Endothelial cell of umbilical vein (primary cell): ENCODE measurements at regions of chr13 and their contacts with region 1.

Region 1: DNA sequence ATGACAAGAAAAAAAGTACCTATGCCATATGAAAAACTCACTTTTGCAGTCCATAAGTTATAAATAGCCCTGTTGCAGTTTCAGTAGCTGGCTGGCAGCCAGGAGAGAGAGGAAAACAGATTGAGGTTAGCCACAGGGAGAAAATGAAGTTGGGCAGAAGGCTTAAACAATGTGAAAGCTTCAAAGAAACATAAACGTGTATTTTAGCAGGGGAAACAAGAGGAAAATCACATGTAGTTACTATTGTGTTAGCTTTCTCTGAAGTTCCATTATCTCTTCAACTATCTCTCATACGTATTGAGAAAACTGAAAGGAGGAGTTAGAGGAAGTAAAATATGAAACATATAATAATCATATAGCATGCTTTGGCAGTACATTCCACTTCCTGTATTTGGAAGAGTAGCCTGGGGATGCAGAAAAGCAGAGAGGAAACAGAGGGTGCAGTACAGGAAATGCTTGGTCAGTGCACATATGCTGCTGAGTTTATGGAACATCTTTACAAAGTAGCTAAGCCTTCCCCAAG is 1551.1 kb downstream of the EFNB2 start:
- DNase-seq: peak; percentile 92
- H3K4me3 ChIP-seq: peak overlapping the region in 1 of 3 experiments; percentile 25
- H3K27ac ChIP-seq: peak overlapping the region; percentile 78
- H3K4me1 ChIP-seq: peaks cover 26% of the 10 kb centered on the region
- H3K27me3 ChIP-seq: no peaks in the 10 kb centered on the region
- CTCF ChIP-seq: no peak
- POLR2A ChIP-seq: no peak

Region 2: GRCh38 chr13:104854698-104855097 is 129.7 kb before region 1 on chr13:
- CTCF ChIA-PET with region 1: no interaction called
- POLR2A ChIA-PET with region 1: no interaction called
- dilution Hi-C with region 1: no loop called
- intact Hi-C with region 1: no loop called
- DNase-seq: no peak
- H3K4me3 ChIP-seq: no peak overlapping the region
- H3K27ac ChIP-seq: no peak overlapping the region
- H3K4me1 ChIP-seq: no peaks in the 10 kb centered on the region
- H3K27me3 ChIP-seq: no peaks in the 10 kb centered on the region
- CTCF ChIP-seq: no peak
- POLR2A ChIP-seq: no peak

Region 3: GRCh38 chr13:105007166-105007808 is 22.9 kb after region 1 on chr13:
- CTCF ChIA-PET with region 1: no interaction called
- POLR2A ChIA-PET with region 1: no interaction called
- dilution Hi-C with region 1: no loop called
- intact Hi-C with region 1: loop called (anchors 2 kb)
- DNase-seq: peak; percentile 85
- H3K4me3 ChIP-seq: no peak overlapping the region
- H3K27ac ChIP-seq: no peak overlapping the region
- H3K4me1 ChIP-seq: peaks cover 4% of the 10 kb centered on the region
- H3K27me3 ChIP-seq: no peaks in the 10 kb centered on the region
- CTCF ChIP-seq: peak in 1 of 2 donors; percentile 7
- POLR2A ChIP-seq: no peak

Region 4: DNA sequence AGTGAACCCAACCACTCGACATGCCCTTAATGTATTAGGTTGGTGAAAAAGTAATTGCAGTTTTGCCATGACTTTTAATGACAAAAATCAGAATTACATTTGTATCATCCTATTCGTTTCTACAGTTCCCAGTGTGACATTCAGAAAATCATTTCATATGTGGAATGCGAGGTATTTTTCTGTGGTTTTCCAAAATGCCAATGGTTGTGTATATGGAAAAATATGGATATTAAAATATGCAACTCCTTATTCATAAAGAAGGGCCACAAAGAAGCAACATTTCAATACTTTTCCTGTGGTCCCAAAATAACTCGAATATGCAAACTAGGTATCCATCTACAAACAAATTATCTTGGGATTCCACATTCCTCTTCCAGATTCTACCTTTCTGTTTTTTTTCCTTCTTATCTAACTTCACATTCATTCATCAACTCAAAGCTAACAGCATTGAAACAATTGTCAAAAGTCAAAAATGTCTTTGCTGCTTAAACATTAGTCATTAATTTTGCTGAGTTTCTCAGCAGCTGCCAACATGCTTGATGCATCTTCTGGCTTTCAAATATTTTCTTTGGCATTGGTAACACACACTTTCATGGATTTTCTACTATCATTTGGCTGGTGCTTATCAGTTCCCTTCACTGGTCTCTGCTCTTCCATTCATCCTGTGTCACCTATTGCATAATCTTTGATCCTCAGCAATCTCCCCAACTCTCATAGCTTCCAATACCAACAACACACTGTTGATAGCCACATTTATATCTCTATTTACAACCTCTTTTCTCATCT is 105.7 kb after region 1 on chr13:
- CTCF ChIA-PET with region 1: no interaction called
- POLR2A ChIA-PET with region 1: no interaction called
- dilution Hi-C with region 1: no loop called
- intact Hi-C with region 1: no loop called
- DNase-seq: peak; percentile 4
- H3K4me3 ChIP-seq: no peak overlapping the region
- H3K27ac ChIP-seq: no peak overlapping the region
- H3K4me1 ChIP-seq: no peaks in the 10 kb centered on the region
- H3K27me3 ChIP-seq: no peaks in the 10 kb centered on the region
- CTCF ChIP-seq: no peak
- POLR2A ChIP-seq: no peak

Region 5: GRCh38 chr13:105116966-105117365 is 132.6 kb after region 1 on chr13:
- CTCF ChIA-PET with region 1: no interaction called
- POLR2A ChIA-PET with region 1: no interaction called
- dilution Hi-C with region 1: no loop called
- intact Hi-C with region 1: loop called (anchors 1 kb)
- DNase-seq: peak; percentile 90
- H3K4me3 ChIP-seq: no peak overlapping the region
- H3K27ac ChIP-seq: peak overlapping the region; percentile 52
- H3K4me1 ChIP-seq: peaks cover 30% of the 10 kb centered on the region
- H3K27me3 ChIP-seq: no peaks in the 10 kb centered on the region
- CTCF ChIP-seq: no peak
- POLR2A ChIP-seq: no peak

Region 6: DNA sequence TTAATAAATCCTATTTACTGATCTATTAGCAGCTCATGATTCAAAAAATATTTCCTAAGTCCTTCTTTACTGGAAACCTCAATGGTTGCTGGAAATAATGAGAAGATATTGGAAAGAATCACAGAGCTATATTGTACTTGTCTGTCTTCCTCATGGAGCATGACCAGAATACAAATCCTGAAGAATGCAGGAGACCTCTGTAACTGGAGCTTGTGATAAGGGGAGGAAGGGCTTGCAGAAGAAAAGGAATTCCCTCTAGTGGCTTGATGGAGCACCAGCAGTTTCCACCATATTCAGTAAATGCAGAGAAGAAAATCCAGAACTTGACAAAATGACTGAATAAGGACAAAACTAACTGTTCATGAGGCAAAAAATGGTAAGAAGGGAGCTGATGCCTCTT is 218.0 kb after region 1 on chr13:
- CTCF ChIA-PET with region 1: interaction called, 10 read pairs
- POLR2A ChIA-PET with region 1: no interaction called
- dilution Hi-C with region 1: no loop called
- intact Hi-C with region 1: loop called (anchors 5 kb)
- DNase-seq: peak; percentile 69
- H3K4me3 ChIP-seq: no peak overlapping the region
- H3K27ac ChIP-seq: no peak overlapping the region
- H3K4me1 ChIP-seq: no peaks in the 10 kb centered on the region
- H3K27me3 ChIP-seq: no peaks in the 10 kb centered on the region
- CTCF ChIP-seq: peak; percentile 51 to 70
- POLR2A ChIP-seq: no peak

Region 7: GRCh38 chr13:105436943-105437342 is 452.6 kb after region 1 on chr13:
- CTCF ChIA-PET with region 1: no interaction called
- POLR2A ChIA-PET with region 1: no interaction called
- dilution Hi-C with region 1: no loop called
- intact Hi-C with region 1: loop called (anchors 1 kb)
- DNase-seq: peak; percentile 92
- H3K4me3 ChIP-seq: no peak overlapping the region
- H3K27ac ChIP-seq: peak overlapping the region; percentile 74
- H3K4me1 ChIP-seq: peaks cover 33% of the 10 kb centered on the region
- H3K27me3 ChIP-seq: no peaks in the 10 kb centered on the region
- CTCF ChIP-seq: no peak
- POLR2A ChIP-seq: no peak